ENCODE measurements at regions of chr17 and their contacts with region 1.

Region 1: GRCh38 chr17:31248986-31249834 is 47.8 kb downstream of the OMG start:
- DNase-seq: no peak
- ATAC-seq: no peak
- H3K4me3 ChIP-seq: no peak overlapping the region
- H3K27ac ChIP-seq: no peak overlapping the region; the same call in 1 of the 2 replicates
- H3K4me1 ChIP-seq: peaks cover 29% of the 10 kb centered on the region
- H3K27me3 ChIP-seq: no peaks in the 10 kb centered on the region
- CTCF ChIP-seq: no peak
- EP300 ChIP-seq: no peak
- POLR2A ChIP-seq: no peak
- RAD21 ChIP-seq: no peak

Region 2: DNA sequence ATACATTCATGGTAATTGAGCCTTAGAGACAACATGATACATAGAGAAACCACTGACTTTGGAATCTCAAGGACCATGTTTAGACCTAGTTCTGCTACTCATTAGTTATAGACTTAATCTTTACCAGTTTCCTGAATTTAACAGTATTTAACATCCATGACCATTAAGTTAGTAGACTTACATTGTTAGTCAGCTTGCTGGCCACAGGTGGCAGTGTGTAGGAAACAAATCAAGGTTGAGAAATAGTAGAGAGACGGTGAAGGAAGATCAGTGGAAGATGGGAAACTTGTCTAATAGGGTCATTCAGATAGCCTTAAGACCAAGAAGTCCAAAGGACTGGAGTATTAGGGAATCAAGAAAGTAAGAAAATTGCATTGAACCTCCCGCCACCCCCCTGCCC is 16.8 kb after region 1 on chr17:
- CTCF ChIA-PET with region 1: interaction called, 6 read pairs
- POLR2A ChIA-PET with region 1: interaction called, 3 read pairs
- RAD21 ChIA-PET with region 1: no interaction called
- SMC1A ChIA-PET with region 1: interaction called, 10 read pairs
- in situ Hi-C with region 1: no loop called
- intact Hi-C with region 1: no loop called
- DNase-seq: no peak
- ATAC-seq: no peak
- H3K4me3 ChIP-seq: no peak overlapping the region
- H3K27ac ChIP-seq: no peak overlapping the region
- H3K4me1 ChIP-seq: no peaks in the 10 kb centered on the region
- H3K27me3 ChIP-seq: no peaks in the 10 kb centered on the region
- CTCF ChIP-seq: peak; percentile 21 to 33 (median 29); a peak in 3 of 6 replicates
- EP300 ChIP-seq: no peak
- POLR2A ChIP-seq: no peak
- RAD21 ChIP-seq: peak; percentile 29; the same call in 1 of the 2 replicates

Region 3: GRCh38 chr17:31294820-31295488 is 45.7 kb after region 1 on chr17:
- CTCF ChIA-PET with region 1: no interaction called
- POLR2A ChIA-PET with region 1: no interaction called
- RAD21 ChIA-PET with region 1: no interaction called
- SMC1A ChIA-PET with region 1: no interaction called
- in situ Hi-C with region 1: no loop called
- intact Hi-C with region 1: no loop called
- DNase-seq: no peak
- ATAC-seq: no peak
- H3K4me3 ChIP-seq: no peak overlapping the region
- H3K27ac ChIP-seq: no peak overlapping the region
- H3K4me1 ChIP-seq: no peaks in the 10 kb centered on the region
- H3K27me3 ChIP-seq: no peaks in the 10 kb centered on the region
- CTCF ChIP-seq: no peak
- EP300 ChIP-seq: no peak
- POLR2A ChIP-seq: no peak
- RAD21 ChIP-seq: no peak

Region 4: GRCh38 chr17:31313982-31314784 is 65.0 kb after region 1 on chr17 and contains the start of gene EVI2B:
- CTCF ChIA-PET with region 1: interaction called, 4 read pairs
- POLR2A ChIA-PET with region 1: interaction called, 6 read pairs
- RAD21 ChIA-PET with region 1: interaction called, 22 read pairs
- SMC1A ChIA-PET with region 1: interaction called, 14 read pairs
- in situ Hi-C with region 1: no loop called
- intact Hi-C with region 1: loop called (anchors 1 kb)
- DNase-seq: peak; percentile 66
- ATAC-seq: peak; percentile 30
- H3K4me3 ChIP-seq: peak within 1 kb of the TSS; percentile 77
- H3K27ac ChIP-seq: peak within 1 kb of the TSS; percentile 95
- H3K4me1 ChIP-seq: peaks cover 11% of the 10 kb centered on the region
- H3K27me3 ChIP-seq: no peaks in the 10 kb centered on the region
- CTCF ChIP-seq: no peak
- EP300 ChIP-seq: 0 out of 4 replicates have a peak, but pooled peaks of 1 of the 2 experiments have one; percentile 11
- POLR2A ChIP-seq: no peak
- RAD21 ChIP-seq: no peak
- polyA plus RNA-seq, gene EVI2B: 49.2 to 64.4 TPM

Region 5: DNA sequence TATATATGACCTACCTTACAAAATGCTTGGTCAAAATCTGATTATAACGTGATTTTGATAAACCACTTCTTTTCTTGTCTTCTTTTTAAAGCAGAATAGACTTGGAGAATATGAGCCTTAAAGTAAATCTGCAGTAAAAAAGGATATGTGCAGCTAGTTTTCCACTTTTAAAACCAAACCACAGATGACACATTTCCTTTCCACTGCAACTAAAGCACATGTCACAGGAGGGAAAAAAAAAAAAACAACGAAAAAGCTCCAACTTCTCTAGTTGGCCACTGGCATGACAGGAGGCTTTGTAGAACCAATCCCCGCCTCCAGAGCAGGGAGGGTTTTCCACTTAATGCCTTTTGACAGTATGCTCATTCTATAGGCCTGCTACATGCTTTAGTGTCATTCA is 72.3 kb after region 1 on chr17 and contains the start of gene EVI2A:
- CTCF ChIA-PET with region 1: interaction called, 4 read pairs
- POLR2A ChIA-PET with region 1: interaction called, 4 read pairs
- RAD21 ChIA-PET with region 1: interaction called, 10 read pairs
- SMC1A ChIA-PET with region 1: interaction called, 14 read pairs
- in situ Hi-C with region 1: no loop called
- intact Hi-C with region 1: no loop called
- DNase-seq: peak; percentile 69
- ATAC-seq: peak; percentile 74
- H3K4me3 ChIP-seq: peak within 1 kb of the TSS; percentile 65
- H3K27ac ChIP-seq: peak within 1 kb of the TSS; percentile 95
- H3K4me1 ChIP-seq: peaks cover 4% of the 10 kb centered on the region; the same call in 1 of the 2 replicates
- H3K27me3 ChIP-seq: no peaks in the 10 kb centered on the region
- CTCF ChIP-seq: no peak
- EP300 ChIP-seq: peak in 1 of 2 experiments; percentile 31; a peak in 1 of 4 replicates
- POLR2A ChIP-seq: no peak
- RAD21 ChIP-seq: no peak
- polyA plus RNA-seq, gene EVI2A: 54.5 to 78.3 TPM

Measured in GM12878 (cell line).